ENCODE measurements at regions of chr9 and their contacts with region 1.

Region 1: DNA sequence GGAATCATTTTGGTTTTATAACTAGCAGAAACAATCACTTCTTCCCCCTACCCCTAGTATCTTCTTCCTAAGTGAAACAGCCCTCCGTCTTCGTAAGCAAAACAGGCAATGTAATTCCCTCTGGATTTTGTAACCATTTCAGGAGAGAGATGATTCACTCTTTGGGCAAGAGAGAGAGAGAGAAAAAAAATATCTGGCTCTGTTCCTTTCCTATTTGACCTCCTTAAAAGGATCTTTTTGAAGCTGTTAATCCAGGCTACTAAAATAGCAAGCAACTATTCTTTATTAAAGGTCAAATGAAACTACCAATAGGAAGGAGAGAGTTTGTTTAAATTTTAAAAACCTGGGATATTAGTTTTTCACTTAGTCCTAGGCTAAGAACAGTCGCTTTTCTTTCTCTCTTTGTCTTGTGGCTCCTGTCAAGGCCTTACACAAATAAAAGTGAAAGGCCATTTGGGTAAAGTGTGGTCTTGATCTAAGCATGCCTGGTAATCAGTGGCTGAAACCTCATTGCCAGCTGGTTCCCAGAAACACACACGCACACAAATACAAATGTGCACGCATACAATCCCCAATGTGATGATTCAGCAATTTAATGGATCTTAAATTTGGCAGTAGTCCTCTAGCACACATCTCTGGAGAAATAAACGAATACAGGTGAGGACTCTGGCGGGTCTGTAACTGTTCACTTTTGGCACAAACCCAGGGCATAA is 70.2 kb downstream of the PRUNE2 start:
- DNase-seq: no peak
- ATAC-seq: peak; percentile 90
- H3K4me3 ChIP-seq: no peak overlapping the region
- H3K27ac ChIP-seq: peak overlapping the region; percentile 95 to 99
- H3K4me1 ChIP-seq: peaks cover 3 to 18% of the 10 kb centered on the region in 2 donors
- H3K27me3 ChIP-seq: no peaks in the 10 kb centered on the region

Region 2: GRCh38 chr9:76773036-76773435 is 62.7 kb before region 1 on chr9:
- intact Hi-C with region 1: no loop called
- DNase-seq: no peak
- ATAC-seq: no peak
- H3K4me3 ChIP-seq: no peak overlapping the region
- H3K27ac ChIP-seq: no peak overlapping the region
- H3K4me1 ChIP-seq: peaks cover 3 to 9% of the 10 kb centered on the region in 2 donors
- H3K27me3 ChIP-seq: no peaks in the 10 kb centered on the region

Region 3: DNA sequence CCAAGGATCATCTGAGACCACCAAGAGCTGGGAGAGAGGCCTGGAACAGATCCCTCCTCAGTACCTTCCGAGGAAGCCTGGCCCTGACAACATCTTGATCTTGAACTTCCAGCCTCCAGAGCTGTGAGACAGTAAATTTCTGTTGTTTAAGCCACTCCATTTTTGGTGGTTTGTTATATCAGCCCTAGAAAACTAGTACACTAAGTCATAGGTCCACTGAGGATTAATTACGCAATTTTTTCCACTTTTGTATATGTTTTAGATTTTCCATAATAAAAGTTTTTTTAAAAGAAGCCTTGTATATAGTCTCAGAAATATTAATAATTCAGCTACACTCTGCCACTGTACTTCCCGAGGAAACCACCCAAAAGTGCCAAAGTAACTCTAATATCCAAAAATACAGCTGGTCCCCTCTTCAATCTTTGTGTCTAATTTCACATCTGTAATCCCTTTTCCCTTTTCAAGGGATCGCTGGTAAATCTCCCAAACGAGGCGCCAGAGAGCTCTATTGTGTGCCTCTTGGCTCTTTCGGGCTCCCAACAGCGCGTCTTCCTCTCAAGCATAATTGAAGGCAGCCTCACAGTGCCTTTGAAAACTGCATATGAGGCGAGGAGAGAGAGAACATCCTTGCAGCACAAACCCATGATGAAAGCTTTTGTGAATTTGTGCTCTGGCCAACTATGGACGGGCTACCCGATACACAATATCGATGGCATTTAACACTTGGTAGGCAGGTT is 37.5 kb after region 1 on chr9:
- intact Hi-C with region 1: loop called in 1 of 2 experiments (anchors 5 kb)
- DNase-seq: no peak
- ATAC-seq: peak; percentile 55
- H3K4me3 ChIP-seq: no peak overlapping the region
- H3K27ac ChIP-seq: peak overlapping the region; percentile 68 to 94
- H3K4me1 ChIP-seq: peaks cover 9 to 22% of the 10 kb centered on the region in 2 donors
- H3K27me3 ChIP-seq: no peaks in the 10 kb centered on the region

Region 4: GRCh38 chr9:76893395-76893932 is 57.7 kb after region 1 on chr9:
- intact Hi-C with region 1: loop called in 1 of 2 experiments (anchors 5 kb)
- DNase-seq: peak; percentile 72 to 81
- ATAC-seq: peak; percentile 84
- H3K4me3 ChIP-seq: no peak overlapping the region
- H3K27ac ChIP-seq: peak overlapping the region; percentile 44 to 80
- H3K4me1 ChIP-seq: peaks cover 15 to 22% of the 10 kb centered on the region in 2 donors
- H3K27me3 ChIP-seq: no peaks in the 10 kb centered on the region

Measured in aorta (tissue), 5 donors.